Heart right ventricle (tissue), 16 donors: ENCODE measurements at regions of chr1 and their contacts with region 1.

Region 1: GRCh38 chr1:204072931-204073836 is at the start of gene SOX13:
- DNase-seq: peak; percentile 86 to 90
- ATAC-seq: peak; percentile 82 to 87 (median 84)
- H3K4me3 ChIP-seq: peak within 1 kb of the TSS; percentile 34 to 90 (median 83)
- H3K27ac ChIP-seq: peak within 1 kb of the TSS; percentile 75 to 95 (median 86)
- H3K4me1 ChIP-seq: peaks cover 0 to 42% (median 35%) of the 10 kb centered on the region in 9 donors
- H3K27me3 ChIP-seq: peaks cover 0 to 59% (median 0%) of the 10 kb centered on the region in 7 donors
- CTCF ChIP-seq: peak in 5 of 9 donors; percentile 19 to 48 (median 33)
- total RNA-seq, gene SOX13: 7.3 to 18.6 (median 12.1) TPM

Region 2: GRCh38 chr1:203861379-203862184 is 211.6 kb before region 1 on chr1 and contains the start of gene SNRPE:
- intact Hi-C with region 1: loop called in 2 of 10 experiments (anchors 2 to 5 kb)
- DNase-seq: peak; percentile 94 to 96
- ATAC-seq: peak; percentile 98 to 99 (median 99)
- H3K4me3 ChIP-seq: peak within 1 kb of the TSS; percentile 43 to 90 (median 82)
- H3K27ac ChIP-seq: peak within 1 kb of the TSS in 9 of 10 donors; percentile 49 to 85 (median 70)
- H3K4me1 ChIP-seq: peaks cover 8 to 27% (median 16%) of the 10 kb centered on the region in 9 donors
- H3K27me3 ChIP-seq: no peaks in the 10 kb centered on the region
- CTCF ChIP-seq: peak; percentile 83 to 98 (median 97)
- total RNA-seq, gene SNRPE: 41.6 to 70.6 (median 50.4) TPM

Region 3: GRCh38 chr1:203871107-203871875 is 201.9 kb before region 1 on chr1:
- intact Hi-C with region 1: loop called in 7 of 10 experiments (anchors 5 kb)
- DNase-seq: peak in 1 of 2 donors; percentile 63
- ATAC-seq: peak; percentile 56 to 93 (median 89)
- H3K4me3 ChIP-seq: no peak overlapping the region
- H3K27ac ChIP-seq: peak overlapping the region in 5 of 10 donors; percentile 23 to 72 (median 41)
- H3K4me1 ChIP-seq: peaks cover 0 to 19% (median 14%) of the 10 kb centered on the region in 9 donors
- H3K27me3 ChIP-seq: no peaks in the 10 kb centered on the region
- CTCF ChIP-seq: peak; percentile 68 to 93 (median 79)

Region 4: GRCh38 chr1:204041232-204041767 is 31.9 kb before region 1 on chr1:
- intact Hi-C with region 1: loop called in 1 of 10 experiments (anchors 5 kb)
- DNase-seq: peak; percentile 37 to 68
- ATAC-seq: peak; percentile 43 to 77 (median 72)
- H3K4me3 ChIP-seq: peak overlapping the region in 1 of 10 donors; percentile 25
- H3K27ac ChIP-seq: peak overlapping the region; percentile 36 to 85 (median 65)
- H3K4me1 ChIP-seq: peaks cover 7 to 57% (median 34%) of the 10 kb centered on the region in 9 donors
- H3K27me3 ChIP-seq: no peaks in the 10 kb centered on the region
- CTCF ChIP-seq: no peak

Region 5: DNA sequence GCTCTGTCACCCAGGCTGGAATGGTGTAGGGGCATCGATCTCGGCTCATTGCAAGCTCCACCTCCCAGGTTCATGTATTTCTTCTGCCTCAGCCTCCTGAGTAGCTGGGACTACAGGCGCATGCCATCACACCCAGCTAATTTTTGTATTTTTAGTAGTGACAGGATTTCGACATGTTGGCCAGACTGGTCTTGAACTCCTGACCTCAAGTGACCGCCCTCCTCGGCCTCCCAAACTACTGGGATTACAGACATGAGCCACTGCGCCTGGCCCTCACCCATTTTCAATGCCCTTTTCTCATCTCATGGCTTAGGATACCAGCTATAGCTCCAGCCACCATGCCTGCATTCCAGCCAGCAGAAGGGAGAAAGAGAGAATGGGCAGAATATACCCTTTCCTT is 13.2 kb before region 1 on chr1:
- intact Hi-C with region 1: no loop called
- DNase-seq: no peak
- ATAC-seq: no peak
- H3K4me3 ChIP-seq: no peak overlapping the region
- H3K27ac ChIP-seq: no peak overlapping the region
- H3K4me1 ChIP-seq: peaks cover 0 to 7% (median 4%) of the 10 kb centered on the region in 9 donors
- H3K27me3 ChIP-seq: no peaks in the 10 kb centered on the region
- CTCF ChIP-seq: no peak

Region 6: GRCh38 chr1:204094856-204095644 is 21.9 kb after region 1 on chr1:
- intact Hi-C with region 1: loop called in 1 of 10 experiments (anchors 2 kb)
- DNase-seq: peak in 1 of 2 donors; percentile 39
- ATAC-seq: peak in 7 of 8 donors; percentile 43 to 80 (median 65)
- H3K4me3 ChIP-seq: no peak overlapping the region
- H3K27ac ChIP-seq: peak overlapping the region in 4 of 10 donors; percentile 22 to 62 (median 37)
- H3K4me1 ChIP-seq: peaks cover 0 to 90% (median 41%) of the 10 kb centered on the region in 9 donors
- H3K27me3 ChIP-seq: no peaks in the 10 kb centered on the region
- CTCF ChIP-seq: no peak

Region 7: DNA sequence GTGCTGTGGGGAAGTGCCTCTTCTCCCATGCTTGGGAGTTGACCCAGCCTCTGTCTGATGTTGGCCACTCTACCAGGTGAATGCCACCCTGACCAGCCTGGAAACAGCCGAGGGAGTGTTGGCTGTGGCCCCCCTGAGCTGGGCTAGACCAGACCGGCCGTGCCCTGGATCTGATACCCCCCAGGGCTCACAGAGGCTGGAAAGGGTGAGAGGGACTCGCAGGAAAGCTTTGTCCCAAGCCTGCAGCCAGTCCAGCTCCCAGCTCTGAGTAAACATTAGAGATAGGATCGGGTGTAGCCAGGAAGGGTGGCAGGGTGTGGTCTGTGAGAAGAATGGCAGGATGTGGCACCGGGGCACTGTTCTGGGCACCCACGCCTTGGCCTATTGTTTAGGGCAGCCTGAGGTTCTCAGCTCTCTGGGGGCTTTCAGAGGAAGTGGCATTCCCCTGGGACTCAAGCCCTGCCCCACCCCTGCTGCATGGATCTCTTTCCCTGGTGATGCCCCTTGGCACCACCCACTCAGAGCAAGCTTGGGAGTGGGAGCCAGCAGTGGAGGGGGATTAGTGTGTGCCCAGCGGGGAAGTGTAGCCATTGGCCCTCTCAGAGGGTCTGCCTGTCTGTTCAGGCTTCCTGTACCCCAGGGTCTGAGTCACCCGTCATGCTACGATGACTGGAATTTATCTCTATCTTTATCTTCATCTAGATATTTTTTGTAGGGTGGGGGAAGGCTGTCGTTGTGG is 31.1 kb after region 1 on chr1:
- intact Hi-C with region 1: loop called in 1 of 10 experiments (anchors 5 kb)
- DNase-seq: peak; percentile 32 to 54
- ATAC-seq: peak in 7 of 8 donors; percentile 40 to 80 (median 53)
- H3K4me3 ChIP-seq: peak overlapping the region in 1 of 10 donors; percentile 7
- H3K27ac ChIP-seq: peak overlapping the region; percentile 18 to 88 (median 68)
- H3K4me1 ChIP-seq: peaks cover 18 to 85% (median 55%) of the 10 kb centered on the region in 9 donors
- H3K27me3 ChIP-seq: no peaks in the 10 kb centered on the region
- CTCF ChIP-seq: no peak

Region 8: DNA sequence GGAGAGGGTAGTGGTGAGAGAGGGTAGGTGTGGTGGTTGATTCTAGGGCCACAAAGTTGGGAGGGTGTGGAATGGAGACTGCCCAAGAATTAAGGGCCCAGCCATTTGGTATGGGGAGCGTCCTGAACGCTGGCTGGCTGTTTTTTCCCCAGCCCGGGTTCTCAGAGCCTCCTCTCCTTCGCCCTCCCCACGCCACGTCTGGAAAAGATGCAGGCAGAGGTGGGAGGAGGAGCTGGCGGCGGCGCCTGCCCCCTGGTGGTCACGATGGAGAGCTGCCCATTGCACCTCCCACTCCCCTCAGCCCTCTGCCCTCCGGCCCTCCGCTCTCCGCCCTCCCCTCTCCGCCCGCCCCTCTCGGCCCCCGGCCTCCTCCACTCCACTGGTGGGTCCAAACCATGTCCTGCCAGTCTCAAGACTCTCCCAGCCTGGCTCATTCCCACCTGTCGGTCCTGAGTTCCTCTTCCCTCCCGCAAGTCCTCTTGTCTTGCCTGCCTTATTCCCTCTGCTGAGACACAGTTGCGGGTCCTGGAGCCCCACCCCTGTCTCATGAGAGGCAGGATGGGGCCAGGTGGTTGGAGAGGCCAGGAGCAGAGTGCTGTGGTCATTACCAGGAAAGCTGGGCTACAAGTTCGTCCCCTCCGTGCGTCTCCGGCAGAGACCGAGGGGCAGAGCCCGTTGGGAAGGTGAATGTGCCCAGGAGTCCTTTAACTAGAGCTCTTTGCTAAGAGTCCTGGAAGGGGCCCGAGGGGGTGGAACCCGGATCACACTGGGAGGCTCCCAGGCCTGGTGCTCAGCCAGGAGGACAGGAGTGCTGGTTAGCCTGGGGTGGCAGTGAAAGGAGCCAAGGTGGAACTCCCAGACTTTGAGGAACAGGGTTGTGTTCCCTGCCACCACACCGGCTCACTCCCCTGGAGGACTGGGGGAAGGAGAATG is 56.0 kb after region 1 on chr1:
- intact Hi-C with region 1: loop called in 7 of 10 experiments (anchors 1 to 10 kb)
- DNase-seq: peak; percentile 67 to 73
- ATAC-seq: peak; percentile 79 to 93 (median 84)
- H3K4me3 ChIP-seq: peak overlapping the region in 3 of 10 donors; percentile 10 to 18 (median 17)
- H3K27ac ChIP-seq: peak overlapping the region in 2 of 10 donors; percentile 14 to 71
- H3K4me1 ChIP-seq: peaks cover 8 to 53% (median 27%) of the 10 kb centered on the region in 9 donors
- H3K27me3 ChIP-seq: no peaks in the 10 kb centered on the region
- CTCF ChIP-seq: peak; percentile 81 to 97 (median 92)

Region 9: GRCh38 chr1:204544321-204544720 is 471.1 kb after region 1 on chr1:
- intact Hi-C with region 1: no loop called
- DNase-seq: no peak
- ATAC-seq: no peak
- H3K4me3 ChIP-seq: no peak overlapping the region
- H3K27ac ChIP-seq: peak overlapping the region in 1 of 10 donors; percentile 72
- H3K4me1 ChIP-seq: peaks cover 0 to 18% (median 0%) of the 10 kb centered on the region in 9 donors
- H3K27me3 ChIP-seq: no peaks in the 10 kb centered on the region
- CTCF ChIP-seq: no peak